CD8-positive, alpha-beta T cell (primary cell): ENCODE measurements at regions of chrX and their contacts with region 1.

Region 1: GRCh38 chrX:55717521-55718497 is at the start of gene RRAGB:
- DNase-seq: peak; percentile 78 to 96 (median 89)
- ATAC-seq: peak; percentile 98
- H3K4me3 ChIP-seq: peak within 1 kb of the TSS; percentile 76 to 88
- H3K4me3 Mint-ChIP-seq: peak within 1 kb of the TSS; percentile 75
- H3K27ac ChIP-seq: peak within 1 kb of the TSS; percentile 87 to 93
- H3K27ac Mint-ChIP-seq: peak within 1 kb of the TSS; percentile 92
- H3K4me1 ChIP-seq: peaks cover 14% of the 10 kb centered on the region
- H3K4me1 Mint-ChIP-seq: peaks cover 37% of the 10 kb centered on the region
- H3K27me3 ChIP-seq: no peaks in the 10 kb centered on the region
- H3K27me3 Mint-ChIP-seq: no peaks in the 10 kb centered on the region
- CTCF ChIP-seq: peak; percentile 58
- total RNA-seq, gene RRAGB: 4.9 to 6.6 TPM

Region 2: GRCh38 chrX:54044126-54044876 is 1673.5 kb before region 1 on chrX and contains the start of gene PHF8:
- CTCF ChIA-PET with region 1: no interaction called
- POLR2A ChIA-PET with region 1: no interaction called
- intact Hi-C with region 1: loop called in 1 of 2 experiments (anchors 10 kb)
- DNase-seq: peak; percentile 87 to 96 (median 95)
- ATAC-seq: peak; percentile 82
- H3K4me3 ChIP-seq: peak within 1 kb of the TSS; percentile 75 to 86
- H3K4me3 Mint-ChIP-seq: peak within 1 kb of the TSS; percentile 94
- H3K27ac ChIP-seq: peak within 1 kb of the TSS; percentile 85 to 95
- H3K27ac Mint-ChIP-seq: peak within 1 kb of the TSS; percentile 97
- H3K4me1 ChIP-seq: peaks cover 11% of the 10 kb centered on the region
- H3K4me1 Mint-ChIP-seq: peaks cover 29% of the 10 kb centered on the region
- H3K27me3 ChIP-seq: no peaks in the 10 kb centered on the region
- H3K27me3 Mint-ChIP-seq: no peaks in the 10 kb centered on the region
- CTCF ChIP-seq: no peak
- total RNA-seq, gene PHF8: 41.8 to 43.7 TPM

Region 3: DNA sequence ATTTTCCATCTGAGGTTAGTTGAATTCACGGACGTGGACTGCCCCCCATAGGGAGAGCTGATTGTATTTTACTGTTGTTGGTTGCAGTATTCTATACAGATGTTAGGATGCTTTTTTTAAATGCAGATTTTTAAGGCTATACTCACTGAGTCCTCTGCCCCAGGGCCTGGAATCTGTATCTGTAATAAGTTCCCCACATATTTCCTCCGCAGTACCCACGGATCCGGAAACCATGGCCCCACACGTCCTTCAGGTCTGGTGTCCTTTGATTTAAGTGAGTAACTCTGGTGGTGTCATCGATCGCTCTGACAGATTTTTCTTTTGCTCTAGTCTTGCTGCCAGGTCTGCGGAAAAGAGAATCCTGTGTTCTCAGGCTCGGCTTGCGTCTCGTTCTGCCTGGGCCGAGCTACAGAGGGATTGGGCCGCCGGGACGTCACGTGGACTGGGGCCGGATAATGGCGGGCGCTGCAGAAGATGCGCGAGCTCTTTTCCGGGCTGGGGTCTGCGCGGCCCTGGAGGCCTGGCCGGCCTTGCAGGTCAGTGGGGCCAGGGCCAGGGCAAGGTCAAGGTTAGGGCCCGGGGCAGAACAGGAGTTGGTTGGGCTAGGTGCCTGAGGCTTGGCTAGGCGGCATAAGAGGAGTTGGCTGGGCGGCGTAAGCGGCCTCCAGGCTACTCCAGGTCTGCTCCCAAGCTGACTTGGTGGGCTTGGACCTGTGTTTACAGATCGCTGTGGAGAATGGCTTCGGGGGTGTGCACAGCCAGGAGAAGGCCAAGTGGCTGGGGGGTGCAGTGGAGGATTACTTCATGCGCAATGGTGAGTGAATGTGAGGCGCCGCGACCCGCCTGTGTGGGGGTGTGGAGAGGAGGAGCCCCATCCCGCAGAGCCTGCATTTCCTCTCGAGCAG is 1277.6 kb before region 1 on chrX and contains the start of gene TSR2:
- CTCF ChIA-PET with region 1: no interaction called
- POLR2A ChIA-PET with region 1: no interaction called
- intact Hi-C with region 1: loop called in 1 of 2 experiments (anchors 5 kb)
- DNase-seq: peak; percentile 55 to 90 (median 78)
- ATAC-seq: peak; percentile 93
- H3K4me3 ChIP-seq: peak within 1 kb of the TSS; percentile 93 to 96
- H3K4me3 Mint-ChIP-seq: peak within 1 kb of the TSS; percentile 92
- H3K27ac ChIP-seq: peak within 1 kb of the TSS; percentile 66 to 73
- H3K27ac Mint-ChIP-seq: peak within 1 kb of the TSS; percentile 91
- H3K4me1 ChIP-seq: peaks cover 21% of the 10 kb centered on the region
- H3K4me1 Mint-ChIP-seq: peaks cover 31% of the 10 kb centered on the region
- H3K27me3 ChIP-seq: no peaks in the 10 kb centered on the region
- H3K27me3 Mint-ChIP-seq: no peaks in the 10 kb centered on the region
- CTCF ChIP-seq: no peak
- total RNA-seq, gene TSR2: 38.7 to 41.4 TPM

Region 4: GRCh38 chrX:54639346-54640102 is 1078.3 kb before region 1 on chrX:
- CTCF ChIA-PET with region 1: no interaction called
- POLR2A ChIA-PET with region 1: no interaction called
- intact Hi-C with region 1: loop called in 1 of 2 experiments (anchors 5 kb)
- DNase-seq: peak; percentile 80 to 97 (median 92)
- ATAC-seq: peak; percentile 88
- H3K4me3 ChIP-seq: peak overlapping the region; percentile 60 to 94
- H3K4me3 Mint-ChIP-seq: peak overlapping the region; percentile 97
- H3K27ac ChIP-seq: peak overlapping the region; percentile 97 to 99
- H3K27ac Mint-ChIP-seq: peak overlapping the region; percentile 99
- H3K4me1 ChIP-seq: peaks cover 6% of the 10 kb centered on the region
- H3K4me1 Mint-ChIP-seq: peaks cover 9% of the 10 kb centered on the region
- H3K27me3 ChIP-seq: no peaks in the 10 kb centered on the region
- H3K27me3 Mint-ChIP-seq: no peaks in the 10 kb centered on the region
- CTCF ChIP-seq: peak; percentile 22

Region 5: GRCh38 chrX:54999717-55000598 is 717.9 kb before region 1 on chrX and contains the start of gene APEX2:
- CTCF ChIA-PET with region 1: no interaction called
- POLR2A ChIA-PET with region 1: no interaction called
- intact Hi-C with region 1: loop called in 1 of 2 experiments (anchors 2 kb)
- DNase-seq: peak; percentile 74 to 94 (median 86)
- ATAC-seq: peak; percentile 94
- H3K4me3 ChIP-seq: peak within 1 kb of the TSS; percentile 70 to 71
- H3K4me3 Mint-ChIP-seq: peak within 1 kb of the TSS; percentile 92
- H3K27ac ChIP-seq: peak within 1 kb of the TSS; percentile 97 to 98
- H3K27ac Mint-ChIP-seq: peak within 1 kb of the TSS; percentile 96
- H3K4me1 ChIP-seq: peaks cover 12% of the 10 kb centered on the region
- H3K4me1 Mint-ChIP-seq: peaks cover 35% of the 10 kb centered on the region
- H3K27me3 ChIP-seq: no peaks in the 10 kb centered on the region
- H3K27me3 Mint-ChIP-seq: no peaks in the 10 kb centered on the region
- CTCF ChIP-seq: no peak
- total RNA-seq, gene APEX2: 6.6 to 7.5 TPM

Region 6: DNA sequence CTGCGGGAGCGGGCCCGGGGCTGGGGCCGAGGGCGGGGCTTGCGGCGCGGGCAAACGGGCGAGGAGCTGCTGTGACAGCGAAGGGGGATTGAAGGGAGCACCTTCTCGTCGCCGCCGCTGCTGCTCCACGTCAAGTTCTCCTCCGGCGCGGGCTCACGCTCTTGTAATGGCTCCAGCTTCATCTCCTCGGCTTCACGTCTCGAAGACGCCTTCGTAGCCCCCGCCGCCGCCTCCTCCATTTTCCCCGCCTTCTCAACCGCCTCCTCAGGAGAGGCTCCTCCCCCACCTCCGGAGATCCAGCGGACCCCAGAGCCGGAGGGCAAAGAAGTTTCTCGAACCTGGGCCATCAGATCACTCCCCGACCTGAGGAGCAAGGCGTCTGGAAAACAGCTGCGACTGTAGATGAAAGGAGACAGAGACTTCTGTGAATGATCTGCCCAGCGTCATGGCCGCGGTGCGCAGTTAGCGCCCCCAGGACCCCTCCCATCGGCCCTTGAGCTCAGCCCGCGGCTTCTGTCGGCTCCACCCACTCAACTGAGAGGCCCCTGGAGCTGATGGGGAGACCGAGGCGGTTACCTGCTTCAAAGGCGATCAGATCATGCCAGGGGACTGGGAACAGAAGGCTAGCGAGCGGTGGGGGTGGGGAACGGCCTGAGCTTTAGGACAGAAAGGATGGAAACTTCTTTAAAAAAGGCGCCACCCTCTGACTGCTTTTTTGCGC is 229.1 kb before region 1 on chrX:
- CTCF ChIA-PET with region 1: interaction called, 11 read pairs
- POLR2A ChIA-PET with region 1: interaction called, 25 read pairs
- intact Hi-C with region 1: loop called in 1 of 2 experiments (anchors 10 kb)
- DNase-seq: peak; percentile 30 to 80 (median 67)
- ATAC-seq: peak; percentile 78
- H3K4me3 ChIP-seq: peak overlapping the region; percentile 90 to 91
- H3K4me3 Mint-ChIP-seq: peak overlapping the region; percentile 93
- H3K27ac ChIP-seq: peak overlapping the region; percentile 90 to 94
- H3K27ac Mint-ChIP-seq: peak overlapping the region; percentile 96
- H3K4me1 ChIP-seq: peaks cover 10% of the 10 kb centered on the region
- H3K4me1 Mint-ChIP-seq: peaks cover 14% of the 10 kb centered on the region
- H3K27me3 ChIP-seq: no peaks in the 10 kb centered on the region
- H3K27me3 Mint-ChIP-seq: no peaks in the 10 kb centered on the region
- CTCF ChIP-seq: no peak

Region 7: GRCh38 chrX:55778321-55778720 is 60.5 kb after region 1 on chrX:
- CTCF ChIA-PET with region 1: no interaction called
- POLR2A ChIA-PET with region 1: no interaction called
- intact Hi-C with region 1: no loop called
- DNase-seq: no peak
- ATAC-seq: no peak
- H3K4me3 ChIP-seq: no peak overlapping the region
- H3K4me3 Mint-ChIP-seq: no peak overlapping the region
- H3K27ac ChIP-seq: no peak overlapping the region
- H3K27ac Mint-ChIP-seq: no peak overlapping the region
- H3K4me1 ChIP-seq: no peaks in the 10 kb centered on the region
- H3K4me1 Mint-ChIP-seq: peaks cover 10% of the 10 kb centered on the region
- H3K27me3 ChIP-seq: no peaks in the 10 kb centered on the region
- H3K27me3 Mint-ChIP-seq: no peaks in the 10 kb centered on the region
- CTCF ChIP-seq: no peak

Region 8: GRCh38 chrX:56318076-56318475 is 600.3 kb after region 1 on chrX:
- CTCF ChIA-PET with region 1: no interaction called
- POLR2A ChIA-PET with region 1: no interaction called
- intact Hi-C with region 1: no loop called
- DNase-seq: no peak
- ATAC-seq: no peak
- H3K4me3 ChIP-seq: no peak overlapping the region
- H3K4me3 Mint-ChIP-seq: no peak overlapping the region
- H3K27ac ChIP-seq: no peak overlapping the region
- H3K27ac Mint-ChIP-seq: no peak overlapping the region
- H3K4me1 ChIP-seq: no peaks in the 10 kb centered on the region
- H3K4me1 Mint-ChIP-seq: peaks cover 10% of the 10 kb centered on the region
- H3K27me3 ChIP-seq: no peaks in the 10 kb centered on the region
- H3K27me3 Mint-ChIP-seq: no peaks in the 10 kb centered on the region
- CTCF ChIP-seq: no peak

Region 9: DNA sequence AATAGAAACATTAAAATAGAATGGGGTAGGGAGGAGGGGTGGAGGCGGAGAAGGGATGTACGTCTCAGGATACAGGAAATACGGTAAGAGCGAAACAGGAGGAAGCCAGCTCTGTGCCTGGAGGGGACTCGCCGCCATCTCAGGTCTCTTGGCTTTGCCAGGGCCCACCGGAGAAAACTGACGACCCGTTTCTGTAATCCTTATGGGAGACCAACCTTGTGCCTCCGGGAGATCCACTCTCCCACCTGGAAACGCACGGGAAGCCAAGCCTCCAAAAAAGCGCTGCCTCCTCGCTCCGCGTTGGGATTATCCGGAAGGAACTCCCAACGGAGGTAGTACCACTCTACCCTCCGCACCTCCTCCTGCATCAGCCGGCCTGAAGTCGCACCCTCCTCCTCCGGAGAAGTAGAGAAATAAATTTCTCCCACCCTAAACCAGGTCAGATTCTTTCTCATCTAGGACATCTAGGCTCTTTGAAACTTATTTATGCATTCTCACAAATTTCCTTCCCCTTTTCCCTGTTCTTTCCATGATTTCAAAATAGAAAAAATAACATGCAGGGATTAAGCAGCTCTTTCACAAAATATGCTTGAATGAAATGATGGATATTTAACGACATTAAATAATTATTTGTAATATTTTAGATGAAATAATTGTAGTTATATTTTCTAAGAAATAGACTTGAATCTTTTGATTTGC is 1011.5 kb after region 1 on chrX and contains the start of gene NBDY:
- CTCF ChIA-PET with region 1: no interaction called
- POLR2A ChIA-PET with region 1: no interaction called
- intact Hi-C with region 1: loop called in 1 of 2 experiments (anchors 5 kb)
- DNase-seq: peak; percentile 1 to 71 (median 33)
- ATAC-seq: peak; percentile 84
- H3K4me3 ChIP-seq: peak within 1 kb of the TSS; percentile 72 to 85
- H3K4me3 Mint-ChIP-seq: peak within 1 kb of the TSS; percentile 92
- H3K27ac ChIP-seq: peak within 1 kb of the TSS; percentile 85 to 88
- H3K27ac Mint-ChIP-seq: peak within 1 kb of the TSS; percentile 93
- H3K4me1 ChIP-seq: peaks cover 4% of the 10 kb centered on the region
- H3K4me1 Mint-ChIP-seq: peaks cover 37% of the 10 kb centered on the region
- H3K27me3 ChIP-seq: no peaks in the 10 kb centered on the region
- H3K27me3 Mint-ChIP-seq: no peaks in the 10 kb centered on the region
- CTCF ChIP-seq: no peak
- total RNA-seq, gene NBDY: 20.6 to 22.5 TPM